IMR-90 (cell line): ENCODE measurements at regions of chr4 and their contacts with region 1.

Region 1: GRCh38 chr4:113383111-113383785 is 333.8 kb downstream of the ANK2 start:
- DNase-seq: peak; percentile 67
- ATAC-seq: peak; percentile 49; the same call in 1 of the 2 replicates
- H3K4me3 ChIP-seq: no peak overlapping the region
- H3K27ac ChIP-seq: no peak overlapping the region
- H3K4me1 ChIP-seq: peaks cover 6% of the 10 kb centered on the region
- H3K27me3 ChIP-seq: no peaks in the 10 kb centered on the region; the same call in 1 of the 2 replicates
- CTCF ChIP-seq: no peak
- POLR2A ChIP-seq: no peak
- RAD21 ChIP-seq: no peak

Region 2: DNA sequence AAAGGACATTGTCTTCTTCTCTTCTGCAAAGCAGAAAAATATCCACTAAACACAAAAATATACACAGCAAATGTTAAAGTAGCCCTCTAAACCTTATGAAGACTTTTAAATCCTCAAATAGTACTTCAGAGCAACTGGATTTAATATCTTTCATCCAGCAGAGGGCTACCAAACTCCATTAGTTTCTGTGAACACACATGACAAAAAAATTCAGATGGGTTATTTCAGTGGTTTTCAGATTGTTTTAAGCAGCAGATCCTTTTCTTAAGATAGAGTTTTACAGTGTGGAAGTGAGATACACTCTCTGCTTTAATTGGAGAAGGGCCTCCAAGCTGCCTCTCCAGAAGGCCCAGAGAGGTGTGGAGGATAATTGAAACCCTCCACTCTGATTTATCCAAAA is 277.1 kb before region 1 on chr4:
- CTCF ChIA-PET with region 1: no interaction called
- POLR2A ChIA-PET with region 1: no interaction called
- dilution Hi-C with region 1: no loop called
- in situ Hi-C with region 1: no loop called
- intact Hi-C with region 1: loop called (anchors 5 kb)
- DNase-seq: peak; percentile 40
- ATAC-seq: peak; percentile 64
- H3K4me3 ChIP-seq: no peak overlapping the region
- H3K27ac ChIP-seq: no peak overlapping the region
- H3K4me1 ChIP-seq: no peaks in the 10 kb centered on the region
- H3K27me3 ChIP-seq: no peaks in the 10 kb centered on the region; the same call in 1 of the 2 replicates
- CTCF ChIP-seq: peak; percentile 46
- POLR2A ChIP-seq: no peak
- RAD21 ChIP-seq: peak; percentile 46

Region 3: DNA sequence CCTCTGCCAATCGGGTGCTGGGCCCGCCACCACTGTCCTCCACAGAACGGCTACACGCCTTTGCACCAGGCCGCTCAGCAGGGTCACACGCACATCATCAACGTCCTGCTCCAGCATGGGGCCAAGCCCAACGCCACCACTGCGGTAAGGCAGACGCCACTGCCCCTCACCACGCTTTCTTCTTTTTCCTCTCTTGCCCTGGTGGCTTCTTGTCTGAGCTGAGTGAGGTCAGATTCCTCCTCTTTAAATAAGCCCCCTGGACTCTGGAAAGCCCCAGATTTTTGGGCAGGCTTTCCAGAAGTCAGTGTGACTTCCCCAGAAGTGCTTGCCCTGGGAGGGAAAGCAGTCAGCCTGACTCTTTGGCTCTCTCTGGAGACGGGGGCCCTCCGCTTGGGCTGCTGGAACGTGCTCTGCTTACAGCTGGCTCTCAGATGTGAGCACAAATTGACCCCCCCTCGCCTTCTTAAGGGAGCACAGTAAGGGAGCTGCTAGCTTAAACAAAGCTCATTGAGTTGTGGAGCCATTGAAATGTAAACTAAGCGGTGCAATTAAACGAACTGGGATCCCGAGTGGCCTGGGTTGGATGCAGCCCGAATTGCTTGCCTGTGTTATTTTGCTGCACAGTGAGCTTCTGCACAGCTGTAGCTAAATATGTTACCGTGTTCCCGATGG is 90.7 kb before region 1 on chr4:
- CTCF ChIA-PET with region 1: no interaction called
- POLR2A ChIA-PET with region 1: no interaction called
- dilution Hi-C with region 1: no loop called
- in situ Hi-C with region 1: no loop called
- intact Hi-C with region 1: loop called (anchors 5 kb)
- DNase-seq: peak; percentile 71
- ATAC-seq: peak; percentile 82
- H3K4me3 ChIP-seq: no peak overlapping the region
- H3K27ac ChIP-seq: peak overlapping the region; percentile 66; the same call in 1 of the 2 replicates
- H3K4me1 ChIP-seq: peaks cover 5% of the 10 kb centered on the region
- H3K27me3 ChIP-seq: no peaks in the 10 kb centered on the region
- CTCF ChIP-seq: no peak
- POLR2A ChIP-seq: no peak
- RAD21 ChIP-seq: no peak